Gastrocnemius medialis (tissue), 4 donors: ENCODE measurements at regions of chr7 and their contacts with region 1.

Region 1: GRCh38 chr7:122219253-122219865 is 75.3 kb upstream of the AASS start:
- DNase-seq: no peak
- ATAC-seq: no peak
- H3K4me3 ChIP-seq: no peak overlapping the region
- H3K27ac ChIP-seq: no peak overlapping the region
- H3K4me1 ChIP-seq: no peaks in the 10 kb centered on the region
- H3K27me3 ChIP-seq: no peaks in the 10 kb centered on the region
- CTCF ChIP-seq: peak in 4 of 5 experiments; percentile 8 to 49 (median 36)
- POLR2A ChIP-seq: no peak

Region 2: DNA sequence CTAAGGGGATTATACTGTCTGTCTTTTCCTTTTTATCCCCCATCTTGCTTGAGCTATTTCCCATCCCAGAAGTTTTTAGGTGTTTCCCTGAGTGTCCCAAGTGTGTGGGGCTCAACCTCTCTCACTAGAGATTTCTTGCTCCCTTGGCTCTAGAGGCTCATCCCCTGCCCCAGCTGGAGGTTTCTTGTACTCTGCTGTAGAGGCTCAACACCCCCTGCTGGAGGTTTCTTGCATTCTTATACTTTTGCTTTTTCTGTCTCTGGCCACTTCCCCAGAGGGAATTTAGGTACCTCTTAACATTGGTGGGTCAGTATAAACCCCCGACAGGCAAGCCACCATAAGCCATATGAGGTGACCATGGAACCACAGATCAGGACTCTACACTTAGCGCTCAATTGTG is 709.1 kb before region 1 on chr7:
- in situ Hi-C with region 1: no loop called
- intact Hi-C with region 1: no loop called
- DNase-seq: no peak
- ATAC-seq: no peak
- H3K4me3 ChIP-seq: no peak overlapping the region
- H3K27ac ChIP-seq: no peak overlapping the region
- H3K4me1 ChIP-seq: no peaks in the 10 kb centered on the region
- H3K27me3 ChIP-seq: no peaks in the 10 kb centered on the region
- CTCF ChIP-seq: no peak
- POLR2A ChIP-seq: no peak

Region 3: DNA sequence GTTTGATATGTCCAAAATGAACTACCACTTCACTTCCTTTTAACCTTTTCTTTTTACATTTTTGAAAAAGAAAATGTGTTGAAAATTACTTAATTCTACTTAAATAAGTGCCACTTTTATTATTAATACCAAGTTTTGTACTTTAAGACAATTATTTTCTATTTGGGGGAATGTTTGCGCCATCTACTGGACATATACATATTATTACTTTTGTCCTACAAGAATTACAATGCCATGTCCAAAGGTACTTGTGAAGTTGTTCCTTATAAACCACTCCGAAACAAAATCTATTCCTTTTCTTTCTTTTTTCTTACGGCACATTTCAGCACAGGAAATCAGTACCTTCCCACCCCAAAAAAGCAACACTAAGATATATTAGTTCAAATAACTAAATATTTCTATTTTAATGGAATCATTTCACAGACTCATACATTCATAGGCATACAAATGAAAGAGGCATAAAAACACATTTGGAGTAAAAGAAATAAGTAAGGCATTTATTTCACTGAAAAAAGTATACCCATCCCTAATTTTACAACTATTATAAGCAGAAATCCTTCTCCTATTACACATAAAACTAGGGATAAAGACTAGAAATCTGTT is 309.6 kb after region 1 on chr7:
- in situ Hi-C with region 1: loop called in 3 of 4 experiments (anchors 10 to 25 kb)
- intact Hi-C with region 1: loop called (anchors 2 kb)
- DNase-seq: no peak
- ATAC-seq: no peak
- H3K4me3 ChIP-seq: no peak overlapping the region
- H3K27ac ChIP-seq: no peak overlapping the region
- H3K4me1 ChIP-seq: no peaks in the 10 kb centered on the region
- H3K27me3 ChIP-seq: no peaks in the 10 kb centered on the region
- CTCF ChIP-seq: peak in 4 of 5 experiments; percentile 13 to 55 (median 36)
- POLR2A ChIP-seq: no peak

Region 4: GRCh38 chr7:123154231-123154860 is 935.0 kb after region 1 on chr7:
- in situ Hi-C with region 1: no loop called
- intact Hi-C with region 1: loop called (anchors 5 kb)
- DNase-seq: peak; percentile 4 to 36
- ATAC-seq: peak in 1 of 2 donors; percentile 71
- H3K4me3 ChIP-seq: no peak overlapping the region
- H3K27ac ChIP-seq: no peak overlapping the region
- H3K4me1 ChIP-seq: no peaks in the 10 kb centered on the region
- H3K27me3 ChIP-seq: no peaks in the 10 kb centered on the region
- CTCF ChIP-seq: peak; percentile 30 to 66 (median 47)
- POLR2A ChIP-seq: no peak